K562 (cell line): ENCODE measurements at regions of chr9 and their contacts with region 1.

Region 1: GRCh38 chr9:136118320-136119060 is at the start of gene TMEM250:
- DNase-seq: peak; percentile 91 to 98 (median 96)
- ATAC-seq: peak; percentile 89
- H3K4me3 ChIP-seq: peak within 1 kb of the TSS; percentile 82
- H3K27ac ChIP-seq: peak within 1 kb of the TSS; percentile 95
- H3K4me1 ChIP-seq: peaks cover 18 to 76% of the 10 kb centered on the region in 2 experiments
- H3K27me3 ChIP-seq: no peaks in the 10 kb centered on the region
- CTCF ChIP-seq: peak; percentile 13 to 54 (median 20); a peak in 3 of 6 replicates
- EP300 ChIP-seq: no peak
- POLR2A ChIP-seq: no peak
- RAD21 ChIP-seq: no peak
- polyA plus RNA-seq, gene TMEM250: 0.32 to 0.64 TPM

Region 2: DNA sequence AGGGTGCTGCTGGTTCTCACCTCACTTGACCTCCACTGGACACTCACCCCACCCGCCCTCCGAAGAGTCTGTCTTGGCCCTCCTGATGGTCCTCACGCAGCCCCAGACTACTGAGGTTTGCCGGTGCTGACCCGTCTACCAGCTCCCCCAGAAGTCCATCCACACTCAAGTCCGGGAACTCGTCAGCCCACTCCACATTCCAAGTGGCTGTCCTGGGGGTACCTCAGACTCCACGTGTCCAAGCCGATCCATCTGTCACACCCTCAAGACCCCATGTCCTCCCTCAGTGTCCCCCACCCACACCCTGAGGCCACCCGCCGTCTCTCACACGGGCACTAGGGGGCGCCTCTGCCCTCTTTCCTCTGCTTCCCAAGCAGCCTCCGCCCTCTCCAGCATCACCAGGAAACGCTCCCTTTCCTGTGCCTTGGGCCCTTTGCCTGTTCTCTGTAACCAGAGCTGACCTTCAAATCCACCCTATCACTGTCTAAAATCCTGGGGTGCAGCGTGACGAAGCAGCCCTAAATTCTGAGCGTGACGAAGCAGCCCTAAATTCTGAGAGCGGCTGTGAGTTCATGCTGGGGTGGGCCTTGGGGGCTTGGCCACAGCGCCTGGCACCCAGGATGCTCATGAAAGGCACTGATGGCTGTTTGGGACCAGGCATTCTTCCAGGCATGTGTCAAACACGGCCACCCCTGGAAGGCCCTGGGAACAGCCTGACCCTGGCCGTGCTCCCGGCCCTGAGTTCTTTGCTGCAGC is 320.8 kb before region 1 on chr9:
- CTCF ChIA-PET with region 1: interaction called, 5 read pairs
- POLR2A ChIA-PET with region 1: interaction called, 3 read pairs
- in situ Hi-C with region 1: loop called (anchors 5 kb)
- intact Hi-C with region 1: loop called (anchors 5 kb)
- DNase-seq: peak; percentile 74 to 80 (median 79)
- ATAC-seq: peak; percentile 88
- H3K4me3 ChIP-seq: no peak overlapping the region
- H3K27ac ChIP-seq: no peak overlapping the region
- H3K4me1 ChIP-seq: peaks cover 3 to 32% of the 10 kb centered on the region in 2 experiments; a peak in 3 of 5 replicates
- H3K27me3 ChIP-seq: peaks cover 6 to 35% of the 10 kb centered on the region in 2 experiments; a peak in 4 of 5 replicates
- CTCF ChIP-seq: peak; percentile 75 to 93 (median 82)
- EP300 ChIP-seq: no peak
- POLR2A ChIP-seq: no peak
- RAD21 ChIP-seq: peak; percentile 29 to 73; a peak in 3 of 4 replicates

Region 3: GRCh38 chr9:135804581-135805421 is 313.7 kb before region 1 on chr9:
- CTCF ChIA-PET with region 1: no interaction called
- POLR2A ChIA-PET with region 1: no interaction called
- in situ Hi-C with region 1: loop called (anchors 5 kb)
- intact Hi-C with region 1: no loop called
- DNase-seq: peak in 2 of 4 experiments; percentile 45 to 46
- ATAC-seq: peak; percentile 80
- H3K4me3 ChIP-seq: no peak overlapping the region
- H3K27ac ChIP-seq: no peak overlapping the region
- H3K4me1 ChIP-seq: peaks cover 0 to 20% of the 10 kb centered on the region in 2 experiments; a peak in 2 of 5 replicates
- H3K27me3 ChIP-seq: peaks cover 4 to 5% of the 10 kb centered on the region in 2 experiments; a peak in 3 of 5 replicates
- CTCF ChIP-seq: peak in 2 of 3 experiments; percentile 28 to 41; a peak in 2 of 6 replicates
- EP300 ChIP-seq: no peak
- POLR2A ChIP-seq: no peak
- RAD21 ChIP-seq: no peak

Region 4: DNA sequence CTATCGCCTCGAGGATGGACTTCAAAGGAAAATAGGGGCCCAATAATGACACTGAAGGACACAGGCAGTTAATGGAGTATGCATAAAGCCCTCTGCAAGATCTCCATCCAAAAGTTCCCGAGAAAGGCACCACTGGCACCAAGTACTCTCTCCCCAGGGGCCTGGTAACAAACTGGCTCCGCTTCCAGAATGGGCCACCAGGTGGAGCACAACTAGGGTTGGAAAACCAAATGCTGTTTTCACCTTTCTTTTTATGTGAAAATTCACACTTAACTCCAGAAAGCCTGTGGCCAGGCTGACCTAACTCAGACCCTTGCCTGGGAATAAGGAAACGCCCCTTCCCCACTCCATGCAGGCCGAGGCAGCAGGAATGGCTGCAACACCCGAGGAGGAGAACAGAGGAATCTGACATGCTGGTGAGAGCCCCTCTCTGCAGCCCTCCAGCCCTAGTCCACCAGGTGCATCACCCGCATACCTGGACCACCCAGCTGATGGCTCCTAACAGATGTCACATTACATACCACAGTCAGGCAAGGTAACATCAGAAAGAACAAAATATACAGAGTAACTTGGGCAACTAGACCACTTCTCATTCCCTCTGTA is 253.9 kb before region 1 on chr9:
- CTCF ChIA-PET with region 1: interaction called, 8 read pairs
- POLR2A ChIA-PET with region 1: no interaction called
- in situ Hi-C with region 1: no loop called
- intact Hi-C with region 1: loop called (anchors 10 kb)
- DNase-seq: peak; percentile 68 to 73 (median 70)
- ATAC-seq: peak; percentile 89
- H3K4me3 ChIP-seq: no peak overlapping the region
- H3K27ac ChIP-seq: no peak overlapping the region
- H3K4me1 ChIP-seq: no peaks in the 10 kb centered on the region; a peak in 1 of 5 replicates
- H3K27me3 ChIP-seq: no peaks in the 10 kb centered on the region
- CTCF ChIP-seq: peak; percentile 68 to 88 (median 74)
- EP300 ChIP-seq: no peak
- POLR2A ChIP-seq: no peak
- RAD21 ChIP-seq: peak; percentile 52 to 74

Region 5: GRCh38 chr9:135971892-135972291 is 146.6 kb before region 1 on chr9:
- CTCF ChIA-PET with region 1: interaction called, 14 read pairs
- POLR2A ChIA-PET with region 1: no interaction called
- in situ Hi-C with region 1: no loop called
- intact Hi-C with region 1: loop called (anchors 1 kb)
- DNase-seq: peak; percentile 78 to 89 (median 84)
- ATAC-seq: peak; percentile 84
- H3K4me3 ChIP-seq: no peak overlapping the region
- H3K27ac ChIP-seq: no peak overlapping the region
- H3K4me1 ChIP-seq: peaks cover 0 to 29% of the 10 kb centered on the region in 2 experiments; a peak in 3 of 5 replicates
- H3K27me3 ChIP-seq: peaks cover 14 to 40% of the 10 kb centered on the region in 2 experiments; a peak in 3 of 5 replicates
- CTCF ChIP-seq: no peak
- EP300 ChIP-seq: no peak
- POLR2A ChIP-seq: no peak
- RAD21 ChIP-seq: 0 out of 4 replicates have a peak, but pooled peaks of 1 of the 2 experiments have one; percentile 6

Region 6: GRCh38 chr9:136093995-136094881 is 24.3 kb before region 1 on chr9:
- CTCF ChIA-PET with region 1: interaction called, 44 read pairs
- POLR2A ChIA-PET with region 1: interaction called, 3 read pairs
- in situ Hi-C with region 1: no loop called
- intact Hi-C with region 1: loop called (anchors 2 kb)
- DNase-seq: peak; percentile 78 to 87 (median 86)
- ATAC-seq: peak; percentile 69
- H3K4me3 ChIP-seq: peak overlapping the region; percentile 70
- H3K27ac ChIP-seq: peak overlapping the region; percentile 93
- H3K4me1 ChIP-seq: peaks cover 20 to 70% of the 10 kb centered on the region in 2 experiments; a peak in 4 of 5 replicates
- H3K27me3 ChIP-seq: no peaks in the 10 kb centered on the region
- CTCF ChIP-seq: no peak
- EP300 ChIP-seq: no peak
- POLR2A ChIP-seq: peak; percentile 58; the same call in 1 of the 2 replicates
- RAD21 ChIP-seq: no peak

Region 7: DNA sequence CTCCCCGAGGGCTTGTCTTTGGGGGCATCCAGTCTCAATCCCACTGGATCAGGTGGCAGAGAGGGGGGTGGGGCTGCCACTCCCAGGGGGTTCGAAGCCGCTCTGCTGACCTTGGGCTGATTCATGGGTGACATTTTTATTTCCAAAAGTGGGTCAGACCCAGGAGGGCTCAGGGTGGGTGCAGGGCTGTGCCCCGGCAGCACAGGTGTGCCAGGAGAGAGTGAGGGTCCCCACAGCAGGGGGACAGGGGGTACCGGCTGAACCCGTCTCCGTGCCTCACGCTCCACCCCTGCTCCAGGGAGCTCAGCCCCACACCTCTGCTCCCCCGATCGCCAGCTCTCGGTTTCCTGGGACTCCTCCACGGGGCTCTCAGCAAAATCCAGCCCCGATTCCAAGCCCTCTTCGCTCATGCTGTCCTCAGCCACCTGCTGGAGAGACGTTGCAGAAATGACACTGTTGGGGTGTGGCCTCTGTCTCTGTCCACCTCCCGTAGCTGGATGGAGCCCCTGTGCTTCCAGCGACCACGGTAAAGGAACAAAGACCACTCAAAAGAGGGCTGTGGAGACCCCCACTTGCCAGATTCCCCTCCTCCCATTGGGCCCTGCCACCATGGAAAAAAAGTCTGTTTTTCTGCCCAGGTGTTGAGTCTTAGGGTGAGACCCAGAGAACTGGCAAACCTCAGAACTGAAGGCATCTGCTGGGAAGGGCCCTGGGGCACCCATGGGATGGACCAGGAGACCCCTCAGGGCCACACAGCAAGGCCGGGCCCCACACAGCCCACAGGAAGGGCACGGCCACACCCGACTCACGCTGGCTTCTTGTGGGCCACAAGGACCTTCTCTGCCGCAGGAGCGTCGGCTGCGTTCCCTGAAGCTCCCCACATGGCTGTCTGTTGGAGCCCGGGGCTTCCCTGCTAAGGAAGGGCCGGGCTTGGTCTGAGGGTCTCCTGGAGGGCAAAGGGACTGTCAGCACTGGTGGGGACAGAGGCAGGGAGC is 137.7 kb after region 1 on chr9:
- CTCF ChIA-PET with region 1: no interaction called
- POLR2A ChIA-PET with region 1: no interaction called
- in situ Hi-C with region 1: no loop called
- intact Hi-C with region 1: no loop called
- DNase-seq: peak; percentile 57 to 67 (median 65)
- ATAC-seq: peak; percentile 83
- H3K4me3 ChIP-seq: no peak overlapping the region
- H3K27ac ChIP-seq: no peak overlapping the region
- H3K4me1 ChIP-seq: peaks cover 0 to 88% of the 10 kb centered on the region in 2 experiments; a peak in 3 of 5 replicates
- H3K27me3 ChIP-seq: peaks cover 13 to 56% of the 10 kb centered on the region in 2 experiments; a peak in 4 of 5 replicates
- CTCF ChIP-seq: peak; percentile 47 to 65 (median 58)
- EP300 ChIP-seq: no peak
- POLR2A ChIP-seq: no peak
- RAD21 ChIP-seq: peak in 1 of 2 experiments; percentile 38; a peak in 2 of 4 replicates